G401 (cell line): ENCODE measurements at regions of chr18 and their contacts with region 1.

Region 1: DNA sequence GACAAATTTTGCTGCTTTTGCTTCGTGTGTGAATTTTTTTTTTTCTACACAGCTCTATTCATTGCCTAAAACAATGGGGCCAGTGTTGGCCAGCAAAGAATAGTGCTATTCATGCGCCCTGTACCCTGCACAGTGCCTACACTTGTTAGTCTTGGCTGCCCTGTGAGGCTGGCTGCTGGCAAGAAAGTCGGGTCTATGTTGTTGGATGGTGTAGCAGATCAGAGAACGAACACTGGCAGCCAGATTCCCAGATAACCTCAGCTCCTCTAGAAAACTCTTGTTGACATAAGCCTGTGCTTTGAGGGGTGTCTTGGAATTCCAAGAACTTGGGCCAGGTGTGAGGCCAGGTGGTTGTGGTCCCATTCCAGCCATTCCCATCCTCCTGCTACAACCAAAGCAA is 455.7 kb upstream of the TCF4 start:
- DNase-seq: peak; percentile 36

Region 2: DNA sequence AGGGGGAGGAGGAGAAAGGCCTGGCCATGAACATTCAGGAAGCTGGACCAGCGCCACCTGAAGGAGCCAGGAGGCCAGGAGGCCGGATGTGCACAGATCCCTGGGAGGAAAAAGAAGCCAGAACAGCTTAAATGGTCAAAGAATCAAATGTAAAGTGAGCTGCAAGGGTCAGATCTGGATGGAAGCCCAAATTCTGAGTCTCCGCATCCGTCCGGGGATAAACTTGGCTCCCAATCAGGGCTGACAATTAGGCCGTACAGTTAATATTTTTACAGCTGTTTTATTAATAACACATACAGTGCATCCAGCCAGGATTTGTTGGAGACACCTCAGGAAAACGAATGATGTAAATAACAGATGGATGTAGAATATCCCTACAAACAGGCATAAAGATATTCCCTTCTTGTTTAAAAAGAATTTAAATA is 39.4 kb after region 1 on chr18:
- in situ Hi-C with region 1: loop called (anchors 5 kb)
- DNase-seq: peak; percentile 39